ENCODE measurements at regions of chr5 and their contacts with region 1.

Region 1: GRCh38 chr5:58077416-58077815 is 382.5 kb downstream of the PLK2 start:
- DNase-seq: peak; percentile 69
- ATAC-seq: peak; percentile 63

Region 2: GRCh38 chr5:58114324-58114723 is 36.9 kb after region 1 on chr5:
- intact Hi-C with region 1: loop called (anchors 5 kb)
- DNase-seq: no peak
- ATAC-seq: no peak

Region 3: DNA sequence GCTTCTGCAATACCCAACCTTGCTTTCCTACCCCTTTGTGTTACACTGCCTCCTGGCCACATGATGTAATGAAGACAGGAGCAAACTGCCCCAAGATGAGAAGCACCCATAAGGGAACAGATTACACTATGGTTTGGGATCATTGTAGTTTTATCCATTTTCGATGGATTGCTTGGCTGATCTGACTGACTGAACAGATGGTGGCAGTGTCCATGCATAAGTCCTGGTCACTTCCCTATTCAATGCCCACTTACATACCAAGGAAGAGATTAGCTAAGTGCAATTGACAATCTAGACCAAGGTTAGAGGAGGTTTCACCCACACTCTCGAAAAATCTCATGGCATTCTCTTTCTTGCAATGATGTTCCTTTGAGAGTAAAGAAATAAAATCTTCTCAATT is 825.3 kb after region 1 on chr5:
- intact Hi-C with region 1: no loop called
- DNase-seq: no peak
- ATAC-seq: no peak